ENCODE measurements at regions of chr1 and their contacts with region 1.

Region 1: DNA sequence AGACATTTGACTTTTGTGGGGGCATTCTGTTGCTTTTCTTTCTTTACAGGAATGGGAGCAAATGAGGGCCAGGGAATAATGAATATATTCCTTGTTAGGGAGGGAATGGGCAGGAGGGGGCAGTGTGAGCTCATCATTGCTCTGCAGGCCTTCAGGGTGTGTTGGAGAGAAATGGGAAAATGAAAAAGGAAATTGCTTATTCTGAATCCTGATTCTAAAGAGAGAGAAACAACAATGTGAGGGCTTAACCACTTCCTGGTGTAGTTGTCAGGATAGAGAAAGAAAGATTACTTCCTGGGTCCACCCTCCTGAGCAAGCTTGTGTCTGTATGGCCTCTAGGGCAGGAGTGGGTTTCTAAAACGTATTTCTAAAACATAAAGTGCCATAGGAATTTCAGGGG is 28.3 kb downstream of the VANGL2 start:
- DNase-seq: peak in 1 of 2 experiments; percentile 58
- H3K4me3 ChIP-seq: no peak overlapping the region
- H3K4me3 Mint-ChIP-seq: no peak overlapping the region
- H3K27ac Mint-ChIP-seq: no peak overlapping the region
- H3K4me1 ChIP-seq: no peaks in the 10 kb centered on the region
- H3K4me1 Mint-ChIP-seq: no peaks in the 10 kb centered on the region
- H3K27me3 ChIP-seq: no peaks in the 10 kb centered on the region
- H3K27me3 Mint-ChIP-seq: no peaks in the 10 kb centered on the region
- CTCF ChIP-seq: peak; percentile 58 to 77

Region 2: DNA sequence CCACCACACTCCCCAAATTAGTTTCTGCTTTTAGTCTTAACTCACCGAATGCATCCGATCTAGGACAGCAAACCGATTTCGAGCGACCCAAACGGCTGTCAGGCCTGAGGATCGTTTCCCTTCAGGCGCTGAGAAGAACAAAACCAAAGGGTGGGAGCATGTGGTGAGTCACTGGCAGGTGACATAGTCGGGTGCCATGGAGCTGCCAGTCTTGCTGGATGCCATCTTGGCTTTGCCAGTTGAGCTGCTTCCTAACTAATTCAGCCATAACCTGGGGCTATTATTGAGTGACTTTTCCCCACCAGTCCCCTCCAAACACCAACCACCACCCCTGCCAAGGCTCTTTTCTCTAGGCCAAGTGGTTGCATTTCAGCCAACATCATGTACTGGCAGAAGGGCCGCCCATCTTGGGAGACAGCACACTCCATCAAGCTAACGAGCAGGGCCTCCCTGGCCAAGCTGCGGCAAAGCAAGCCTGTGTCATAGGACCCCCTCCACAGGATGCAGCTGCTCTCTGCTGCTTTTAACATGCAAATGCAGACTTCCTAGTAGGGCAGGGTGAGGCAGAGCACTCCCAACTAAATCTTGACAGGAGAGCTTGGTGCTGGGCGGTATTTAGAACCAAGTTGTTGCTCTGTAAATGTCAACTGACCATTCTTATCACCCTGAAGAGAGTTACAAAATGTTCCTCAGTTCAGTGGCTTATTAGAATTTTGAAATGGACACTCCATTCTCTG is 121.4 kb before region 1 on chr1:
- CTCF ChIA-PET with region 1: no interaction called
- POLR2A ChIA-PET with region 1: no interaction called
- intact Hi-C with region 1: no loop called
- DNase-seq: no peak
- H3K4me3 ChIP-seq: no peak overlapping the region
- H3K4me3 Mint-ChIP-seq: no peak overlapping the region
- H3K27ac Mint-ChIP-seq: no peak overlapping the region
- H3K4me1 ChIP-seq: no peaks in the 10 kb centered on the region
- H3K4me1 Mint-ChIP-seq: no peaks in the 10 kb centered on the region
- H3K27me3 ChIP-seq: no peaks in the 10 kb centered on the region
- H3K27me3 Mint-ChIP-seq: no peaks in the 10 kb centered on the region
- CTCF ChIP-seq: no peak

Region 3: DNA sequence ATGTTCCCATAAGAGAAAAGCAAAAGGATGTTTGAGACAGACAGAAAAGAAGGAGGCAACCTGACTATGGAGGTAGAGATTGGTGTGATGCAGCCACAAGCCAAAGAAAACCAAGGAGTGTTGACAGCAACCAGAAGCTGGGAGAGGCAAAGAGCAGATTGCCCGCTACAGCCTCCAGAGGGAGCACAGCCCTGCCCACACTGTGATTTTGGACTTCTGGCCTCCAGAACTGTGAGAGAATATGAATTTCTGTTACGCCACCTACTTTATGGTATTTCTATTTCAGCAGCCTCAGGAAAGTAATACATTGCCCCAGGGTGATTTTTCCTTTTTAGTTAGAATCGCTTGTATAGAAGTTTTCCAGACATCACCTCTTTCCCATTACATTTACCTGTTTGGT is 66.0 kb after region 1 on chr1:
- CTCF ChIA-PET with region 1: no interaction called
- POLR2A ChIA-PET with region 1: no interaction called
- intact Hi-C with region 1: loop called (anchors 5 kb)
- DNase-seq: peak in 1 of 2 experiments; percentile 51
- H3K4me3 ChIP-seq: no peak overlapping the region
- H3K4me3 Mint-ChIP-seq: no peak overlapping the region
- H3K27ac Mint-ChIP-seq: no peak overlapping the region
- H3K4me1 ChIP-seq: no peaks in the 10 kb centered on the region
- H3K4me1 Mint-ChIP-seq: no peaks in the 10 kb centered on the region
- H3K27me3 ChIP-seq: no peaks in the 10 kb centered on the region
- H3K27me3 Mint-ChIP-seq: peaks cover 3% of the 10 kb centered on the region
- CTCF ChIP-seq: peak; percentile 54 to 71

Region 4: DNA sequence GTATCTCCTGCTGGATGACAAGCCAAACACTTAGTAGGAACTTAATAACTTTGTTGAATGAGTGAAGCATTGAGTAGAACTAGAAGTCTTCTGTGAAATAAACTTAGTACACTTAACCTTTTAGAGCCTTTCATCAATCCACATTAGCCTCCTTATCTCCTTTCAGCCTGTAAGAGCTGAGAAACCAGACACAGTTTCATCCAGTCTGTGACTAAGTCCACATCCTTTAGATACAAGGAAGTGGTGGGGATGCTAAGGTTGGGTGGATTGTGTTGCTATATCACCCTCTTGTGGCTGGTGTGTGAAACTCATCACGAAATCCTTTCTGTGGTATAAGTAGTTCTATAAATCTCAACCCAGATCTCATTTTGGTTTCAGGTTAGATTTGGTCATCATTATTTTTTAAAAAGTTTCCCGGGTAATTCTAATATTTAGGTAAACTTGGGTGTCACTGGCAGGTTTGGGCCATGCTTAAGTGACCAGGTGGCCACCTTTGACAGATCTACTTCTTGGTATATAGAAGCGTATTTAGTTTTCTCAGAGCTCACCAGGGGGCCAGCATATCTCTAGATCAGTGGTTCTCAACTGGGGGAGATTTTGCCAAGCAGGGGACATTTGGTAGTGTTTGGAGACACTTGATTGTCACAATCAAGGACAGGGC is 178.5 kb after region 1 on chr1:
- CTCF ChIA-PET with region 1: interaction called, 3 read pairs
- POLR2A ChIA-PET with region 1: no interaction called
- intact Hi-C with region 1: loop called (anchors 1 kb)
- DNase-seq: peak; percentile 57 to 67
- H3K4me3 ChIP-seq: no peak overlapping the region
- H3K4me3 Mint-ChIP-seq: no peak overlapping the region
- H3K27ac Mint-ChIP-seq: no peak overlapping the region
- H3K4me1 ChIP-seq: no peaks in the 10 kb centered on the region
- H3K4me1 Mint-ChIP-seq: no peaks in the 10 kb centered on the region
- H3K27me3 ChIP-seq: no peaks in the 10 kb centered on the region
- H3K27me3 Mint-ChIP-seq: peaks cover 3% of the 10 kb centered on the region
- CTCF ChIP-seq: peak; percentile 69 to 71

Region 5: GRCh38 chr1:160675641-160676410 is 247.2 kb after region 1 on chr1:
- CTCF ChIA-PET with region 1: no interaction called
- POLR2A ChIA-PET with region 1: no interaction called
- intact Hi-C with region 1: loop called (anchors 5 kb)
- DNase-seq: peak; percentile 70 to 72
- H3K4me3 ChIP-seq: no peak overlapping the region
- H3K4me3 Mint-ChIP-seq: no peak overlapping the region
- H3K27ac Mint-ChIP-seq: no peak overlapping the region
- H3K4me1 ChIP-seq: no peaks in the 10 kb centered on the region
- H3K4me1 Mint-ChIP-seq: no peaks in the 10 kb centered on the region
- H3K27me3 ChIP-seq: no peaks in the 10 kb centered on the region
- H3K27me3 Mint-ChIP-seq: no peaks in the 10 kb centered on the region
- CTCF ChIP-seq: peak; percentile 68 to 83

Region 6: GRCh38 chr1:160963521-160963920 is 534.9 kb after region 1 on chr1:
- CTCF ChIA-PET with region 1: no interaction called
- POLR2A ChIA-PET with region 1: no interaction called
- intact Hi-C with region 1: no loop called
- DNase-seq: no peak
- H3K4me3 ChIP-seq: no peak overlapping the region
- H3K4me3 Mint-ChIP-seq: no peak overlapping the region
- H3K27ac Mint-ChIP-seq: no peak overlapping the region
- H3K4me1 ChIP-seq: no peaks in the 10 kb centered on the region
- H3K4me1 Mint-ChIP-seq: no peaks in the 10 kb centered on the region
- H3K27me3 ChIP-seq: no peaks in the 10 kb centered on the region
- H3K27me3 Mint-ChIP-seq: no peaks in the 10 kb centered on the region
- CTCF ChIP-seq: no peak

Measured in Caco-2 (cell line).